ENCODE measurements at regions of chr4 and their contacts with region 1.

Region 1: GRCh38 chr4:25180524-25181131 is 20.4 kb upstream of the SEPSECS start:
- DNase-seq: peak; percentile 32
- H3K4me3 ChIP-seq: no peak overlapping the region
- H3K27ac ChIP-seq: no peak overlapping the region
- H3K4me1 ChIP-seq: no peaks in the 10 kb centered on the region
- H3K27me3 ChIP-seq: no peaks in the 10 kb centered on the region
- CTCF ChIP-seq: peak; percentile 81 to 82

Region 2: GRCh38 chr4:25367004-25367621 is 186.5 kb after region 1 on chr4:
- CTCF ChIA-PET with region 1: no interaction called
- dilution Hi-C with region 1: no loop called
- in situ Hi-C with region 1: loop called (anchors 10 to 25 kb)
- intact Hi-C with region 1: loop called (anchors 1 kb)
- DNase-seq: peak; percentile 9
- H3K4me3 ChIP-seq: no peak overlapping the region
- H3K27ac ChIP-seq: no peak overlapping the region
- H3K4me1 ChIP-seq: no peaks in the 10 kb centered on the region
- H3K27me3 ChIP-seq: no peaks in the 10 kb centered on the region
- CTCF ChIP-seq: peak; percentile 59 to 62